ENCODE measurements at regions of chr14 and their contacts with region 1.

Region 1: GRCh38 chr14:56339855-56340701 is 221.9 kb downstream of the PELI2 start:
- DNase-seq: peak; percentile 35
- H3K4me3 Mint-ChIP-seq: no peak overlapping the region
- H3K27ac Mint-ChIP-seq: peak overlapping the region; percentile 44
- H3K4me1 Mint-ChIP-seq: peaks cover 8% of the 10 kb centered on the region
- H3K27me3 Mint-ChIP-seq: no peaks in the 10 kb centered on the region

Region 2: GRCh38 chr14:55245657-55246268 is 1094.3 kb before region 1 on chr14:
- intact Hi-C with region 1: loop called (anchors 10 kb)
- DNase-seq: no peak
- H3K4me3 Mint-ChIP-seq: no peak overlapping the region
- H3K27ac Mint-ChIP-seq: no peak overlapping the region
- H3K4me1 Mint-ChIP-seq: no peaks in the 10 kb centered on the region
- H3K27me3 Mint-ChIP-seq: peaks cover 40% of the 10 kb centered on the region

Region 3: GRCh38 chr14:55707365-55707804 is 632.7 kb before region 1 on chr14:
- intact Hi-C with region 1: loop called (anchors 1 kb)
- DNase-seq: no peak
- H3K4me3 Mint-ChIP-seq: no peak overlapping the region
- H3K27ac Mint-ChIP-seq: no peak overlapping the region
- H3K4me1 Mint-ChIP-seq: no peaks in the 10 kb centered on the region
- H3K27me3 Mint-ChIP-seq: no peaks in the 10 kb centered on the region

Region 4: DNA sequence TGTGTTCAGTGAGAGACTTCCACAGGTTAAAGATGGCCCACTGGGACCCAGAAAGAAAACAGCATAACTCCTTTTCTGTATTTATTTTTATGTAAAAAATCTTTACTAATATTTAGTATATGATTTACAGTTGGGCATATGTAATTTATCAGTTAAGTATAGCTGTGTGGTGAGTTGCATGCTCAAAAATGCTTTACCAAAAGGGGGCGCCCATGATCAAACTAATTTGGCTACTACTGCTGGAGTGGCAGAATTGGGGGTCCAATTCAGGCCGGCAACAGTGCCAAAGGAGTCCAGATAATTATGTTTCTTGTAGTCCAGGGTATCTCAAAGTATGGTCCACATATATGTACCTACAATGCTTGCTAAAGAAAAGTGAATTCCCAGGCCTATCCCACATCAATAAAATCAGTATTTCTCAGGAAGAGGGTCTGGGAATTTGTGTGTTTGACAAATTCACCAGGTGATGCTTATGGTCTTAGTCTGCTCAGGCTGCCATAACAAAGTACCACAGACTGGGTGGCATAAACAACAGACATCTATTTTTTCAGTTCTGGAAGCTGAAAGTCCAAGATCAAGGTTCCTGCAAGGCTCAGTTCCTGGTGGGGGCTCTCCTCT is 608.1 kb before region 1 on chr14:
- intact Hi-C with region 1: loop called (anchors 1 kb)
- DNase-seq: peak; percentile 21
- H3K4me3 Mint-ChIP-seq: no peak overlapping the region
- H3K27ac Mint-ChIP-seq: no peak overlapping the region
- H3K4me1 Mint-ChIP-seq: peaks cover 26% of the 10 kb centered on the region
- H3K27me3 Mint-ChIP-seq: peaks cover 4% of the 10 kb centered on the region

Region 5: GRCh38 chr14:55807059-55807499 is 533.0 kb before region 1 on chr14:
- intact Hi-C with region 1: loop called (anchors 2 kb)
- DNase-seq: peak; percentile 70
- H3K4me3 Mint-ChIP-seq: peak overlapping the region; percentile 45
- H3K27ac Mint-ChIP-seq: peak overlapping the region; percentile 85
- H3K4me1 Mint-ChIP-seq: peaks cover 60% of the 10 kb centered on the region
- H3K27me3 Mint-ChIP-seq: no peaks in the 10 kb centered on the region

Region 6: DNA sequence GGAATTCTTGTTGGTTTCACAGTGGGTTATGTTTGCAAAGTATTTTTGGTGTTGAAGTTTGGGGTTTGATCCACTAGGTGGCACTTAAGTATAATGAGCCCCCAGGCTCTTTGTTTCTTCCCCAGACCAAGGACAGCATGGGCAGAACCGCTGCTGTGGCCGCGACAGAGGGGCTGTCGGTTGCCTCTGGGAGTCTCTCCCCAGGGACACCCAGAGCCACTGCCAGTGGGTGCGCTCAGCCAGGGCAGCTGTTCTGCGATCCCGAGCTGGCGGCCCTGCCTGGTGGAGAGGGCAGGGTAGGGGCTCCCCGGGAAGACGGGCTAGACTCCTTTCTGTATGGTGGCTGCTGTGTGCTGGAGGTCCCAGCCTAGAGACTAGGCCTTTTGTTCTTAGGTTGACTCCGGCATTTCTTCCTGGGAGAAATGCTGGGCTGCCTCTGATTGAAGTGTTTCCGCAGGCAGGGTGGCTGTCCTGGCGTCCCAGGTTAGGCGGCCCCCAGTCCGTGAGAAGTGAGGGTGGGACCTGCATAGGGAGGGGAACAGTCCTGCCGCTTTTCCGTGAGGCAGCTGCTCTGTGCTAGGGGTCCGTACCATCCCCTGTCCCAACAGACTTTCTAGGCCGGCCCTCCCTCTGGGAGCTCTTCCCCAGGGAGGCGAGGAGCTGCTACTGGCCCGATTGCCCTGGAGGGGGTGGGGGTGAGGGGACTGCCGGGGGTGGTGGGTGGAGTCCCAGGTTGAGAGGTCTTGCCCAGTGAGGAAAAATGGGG is 475.0 kb before region 1 on chr14:
- intact Hi-C with region 1: loop called (anchors 1 kb)
- DNase-seq: no peak
- H3K4me3 Mint-ChIP-seq: no peak overlapping the region
- H3K27ac Mint-ChIP-seq: no peak overlapping the region
- H3K4me1 Mint-ChIP-seq: peaks cover 18% of the 10 kb centered on the region
- H3K27me3 Mint-ChIP-seq: peaks cover 26% of the 10 kb centered on the region

Region 7: GRCh38 chr14:56271970-56272369 is 68.1 kb before region 1 on chr14:
- intact Hi-C with region 1: no loop called
- DNase-seq: no peak
- H3K4me3 Mint-ChIP-seq: no peak overlapping the region
- H3K27ac Mint-ChIP-seq: no peak overlapping the region
- H3K4me1 Mint-ChIP-seq: no peaks in the 10 kb centered on the region
- H3K27me3 Mint-ChIP-seq: peaks cover 2% of the 10 kb centered on the region

Region 8: DNA sequence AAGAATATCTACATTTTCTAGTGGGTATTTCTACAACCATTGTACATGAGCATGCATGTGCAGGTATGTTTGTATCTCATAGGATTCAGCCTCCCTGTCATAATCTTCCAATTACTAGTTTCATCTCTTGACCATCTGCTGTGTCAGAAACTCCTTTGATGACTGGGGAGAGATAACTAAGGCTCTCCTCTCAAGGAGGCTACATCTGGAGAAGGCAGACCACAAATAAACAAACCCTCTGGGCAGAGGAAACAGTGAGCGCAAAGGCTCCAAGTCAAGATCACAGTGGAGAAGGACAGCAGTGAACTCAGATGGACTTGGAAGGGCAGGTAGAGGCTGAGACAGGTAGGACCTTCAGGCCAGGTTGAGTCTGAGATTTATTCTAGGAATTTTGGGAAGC is 55.4 kb before region 1 on chr14:
- intact Hi-C with region 1: no loop called
- DNase-seq: no peak
- H3K4me3 Mint-ChIP-seq: no peak overlapping the region
- H3K27ac Mint-ChIP-seq: no peak overlapping the region
- H3K4me1 Mint-ChIP-seq: no peaks in the 10 kb centered on the region
- H3K27me3 Mint-ChIP-seq: no peaks in the 10 kb centered on the region

Measured in activated T-helper 1 cell treated with anti-CD3 and anti-CD28 coated beads, Interleukin-12 subunit alpha, Interleukin-12 subunit beta, Interleukin-2, Interleukin-4 antibody, amounts not matched to agents 30 ng/mL and 10 ng/mL and 1 ng/mL, durations not matched to agents 14 hours and 24 hours and 36 hours (primary cell).